MCF 10A (cell line): ENCODE measurements at regions of chr15 and their contacts with region 1.

Region 1: DNA sequence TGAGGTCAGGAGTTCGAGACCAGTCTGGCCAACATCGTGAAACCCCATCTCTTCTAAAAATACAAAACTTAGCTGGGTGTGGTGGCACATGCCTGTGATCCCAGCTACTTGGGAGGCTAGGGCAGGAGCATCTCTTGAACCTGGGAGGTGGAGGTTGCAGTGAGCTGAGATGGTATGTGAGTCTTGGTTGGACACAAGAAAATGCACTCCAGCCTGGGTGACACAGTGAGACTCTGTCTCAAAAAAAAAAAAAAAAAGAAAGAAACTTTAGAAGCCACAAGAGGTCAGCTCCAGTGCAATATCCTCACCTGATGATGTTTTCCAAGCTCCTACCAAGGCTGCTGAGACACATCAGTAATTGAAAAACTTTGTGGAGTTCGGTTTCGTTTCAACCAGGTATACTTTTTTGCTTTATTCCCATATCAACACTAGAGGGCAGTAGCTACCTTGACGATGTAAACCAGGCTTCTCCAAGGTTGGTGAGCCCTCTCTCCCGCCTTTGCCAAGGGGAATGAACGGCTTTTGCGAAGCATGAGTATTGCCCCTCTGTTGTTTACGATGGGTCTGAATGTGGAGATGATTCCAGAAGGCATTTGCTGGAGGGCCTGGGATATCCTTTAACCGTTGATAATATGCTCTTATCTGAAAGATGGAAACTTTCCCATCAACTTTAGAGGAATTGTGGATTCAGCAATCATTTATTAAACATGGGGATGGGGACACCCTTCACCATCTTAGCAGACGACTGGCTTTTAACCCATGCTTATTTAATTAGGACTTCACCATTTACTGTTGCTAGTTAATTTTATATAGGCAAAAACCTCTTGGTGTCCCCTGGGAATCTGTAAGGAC is 202.8 kb downstream of the SV2B start:
- DNase-seq: peak; percentile 77
- H3K4me3 Mint-ChIP-seq: no peak overlapping the region
- H3K27ac Mint-ChIP-seq: no peak overlapping the region
- H3K4me1 Mint-ChIP-seq: no peaks in the 10 kb centered on the region
- H3K27me3 Mint-ChIP-seq: peaks cover 81% of the 10 kb centered on the region
- CTCF ChIP-seq: peak; percentile 75

Region 2: GRCh38 chr15:91329914-91330313 is 27.1 kb after region 1 on chr15:
- CTCF ChIA-PET with region 1: interaction called, 13 read pairs
- POLR2A ChIA-PET with region 1: no interaction called
- intact Hi-C with region 1: no loop called
- DNase-seq: no peak
- H3K4me3 Mint-ChIP-seq: no peak overlapping the region
- H3K27ac Mint-ChIP-seq: no peak overlapping the region
- H3K4me1 Mint-ChIP-seq: no peaks in the 10 kb centered on the region
- H3K27me3 Mint-ChIP-seq: no peaks in the 10 kb centered on the region
- CTCF ChIP-seq: no peak

Region 3: DNA sequence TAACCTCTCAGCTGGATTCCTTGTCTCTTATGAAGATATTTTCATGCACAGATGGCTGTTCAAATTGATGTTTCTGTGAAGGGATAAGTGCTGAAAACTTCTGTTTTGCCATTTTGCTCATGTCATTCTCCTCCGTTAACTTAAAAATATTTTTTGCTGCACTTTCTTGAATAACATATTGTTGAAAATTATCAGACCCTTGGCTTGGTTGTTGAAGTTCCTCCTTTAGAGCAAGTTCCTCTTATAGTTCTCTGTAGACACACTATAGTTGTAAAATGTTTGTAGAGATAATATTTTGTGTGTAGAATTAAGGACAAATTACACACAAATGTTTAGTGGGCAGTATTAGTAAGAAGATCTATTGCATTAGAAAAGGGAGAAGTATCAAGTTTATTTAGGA is 97.7 kb after region 1 on chr15:
- CTCF ChIA-PET with region 1: no interaction called
- POLR2A ChIA-PET with region 1: no interaction called
- intact Hi-C with region 1: no loop called
- DNase-seq: no peak
- H3K4me3 Mint-ChIP-seq: no peak overlapping the region
- H3K27ac Mint-ChIP-seq: no peak overlapping the region
- H3K4me1 Mint-ChIP-seq: no peaks in the 10 kb centered on the region
- H3K27me3 Mint-ChIP-seq: no peaks in the 10 kb centered on the region
- CTCF ChIP-seq: no peak

Region 4: DNA sequence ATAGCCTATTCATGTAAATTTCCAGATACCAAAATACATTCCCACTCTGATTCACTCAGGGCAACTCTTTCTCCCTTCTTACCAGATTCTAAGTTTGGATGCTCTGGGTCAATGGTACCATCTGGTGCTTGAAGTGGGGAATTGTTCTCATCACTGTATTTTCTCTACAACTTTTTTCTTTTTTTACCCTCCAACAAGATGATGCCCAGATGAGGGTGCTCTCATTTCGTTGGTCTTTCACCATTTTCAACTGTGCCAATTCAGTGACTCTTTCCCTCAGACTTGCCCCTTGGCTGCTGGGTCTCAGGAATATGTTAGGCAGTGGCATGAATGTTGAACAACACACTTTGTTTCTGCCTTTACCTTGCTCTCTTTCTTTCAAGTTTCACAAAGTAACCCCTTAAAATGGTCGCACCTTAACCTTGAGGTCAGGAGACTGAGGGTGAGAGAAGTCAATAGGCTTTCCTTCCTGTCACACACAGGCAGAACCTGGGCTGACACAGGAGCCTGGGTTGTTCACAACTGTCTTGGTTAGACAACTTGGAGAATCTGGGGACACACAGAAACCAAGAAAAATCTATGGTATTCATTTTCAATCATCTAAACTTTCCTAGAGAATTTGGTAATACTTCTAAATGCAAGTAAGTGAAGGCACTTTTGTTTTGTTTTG is 220.0 kb after region 1 on chr15:
- CTCF ChIA-PET with region 1: interaction called, 7 read pairs
- POLR2A ChIA-PET with region 1: interaction called, 3 read pairs
- intact Hi-C with region 1: loop called (anchors 1 kb)
- DNase-seq: peak; percentile 56
- H3K4me3 Mint-ChIP-seq: no peak overlapping the region
- H3K27ac Mint-ChIP-seq: no peak overlapping the region
- H3K4me1 Mint-ChIP-seq: peaks cover 13% of the 10 kb centered on the region
- H3K27me3 Mint-ChIP-seq: no peaks in the 10 kb centered on the region
- CTCF ChIP-seq: peak; percentile 43

Region 5: GRCh38 chr15:91852741-91853510 is 550.1 kb after region 1 on chr15:
- CTCF ChIA-PET with region 1: interaction called, 102 read pairs
- POLR2A ChIA-PET with region 1: no interaction called
- intact Hi-C with region 1: loop called (anchors 1 kb)
- DNase-seq: peak; percentile 66
- H3K4me3 Mint-ChIP-seq: peak overlapping the region; percentile 75
- H3K27ac Mint-ChIP-seq: peak overlapping the region; percentile 61
- H3K4me1 Mint-ChIP-seq: peaks cover 42% of the 10 kb centered on the region
- H3K27me3 Mint-ChIP-seq: no peaks in the 10 kb centered on the region
- CTCF ChIP-seq: peak; percentile 78

Region 6: GRCh38 chr15:91981821-91982801 is 679.3 kb after region 1 on chr15:
- CTCF ChIA-PET with region 1: interaction called, 10 read pairs
- POLR2A ChIA-PET with region 1: no interaction called
- intact Hi-C with region 1: loop called (anchors 5 kb)
- DNase-seq: peak; percentile 13
- H3K4me3 Mint-ChIP-seq: no peak overlapping the region
- H3K27ac Mint-ChIP-seq: no peak overlapping the region
- H3K4me1 Mint-ChIP-seq: peaks cover 6% of the 10 kb centered on the region
- H3K27me3 Mint-ChIP-seq: no peaks in the 10 kb centered on the region
- CTCF ChIP-seq: peak; percentile 21

Region 7: GRCh38 chr15:92069308-92070250 is 766.8 kb after region 1 on chr15:
- CTCF ChIA-PET with region 1: interaction called, 105 read pairs
- POLR2A ChIA-PET with region 1: no interaction called
- intact Hi-C with region 1: no loop called
- DNase-seq: peak; percentile 87
- H3K4me3 Mint-ChIP-seq: peak overlapping the region; percentile 67
- H3K27ac Mint-ChIP-seq: peak overlapping the region; percentile 75
- H3K4me1 Mint-ChIP-seq: peaks cover 8% of the 10 kb centered on the region
- H3K27me3 Mint-ChIP-seq: no peaks in the 10 kb centered on the region
- CTCF ChIP-seq: no peak